PC-3 (cell line): ENCODE measurements at regions of chr15 and their contacts with region 1.

Region 1: GRCh38 chr15:34084086-34084485 is 17.6 kb downstream of the EMC7 start:
- DNase-seq: peak; percentile 58
- ATAC-seq: peak; percentile 95
- H3K4me3 ChIP-seq: no peak overlapping the region
- H3K27ac ChIP-seq: no peak overlapping the region
- H3K4me1 ChIP-seq: no peaks in the 10 kb centered on the region
- H3K27me3 ChIP-seq: no peaks in the 10 kb centered on the region
- CTCF ChIP-seq: no peak

Region 2: GRCh38 chr15:34001536-34001935 is 82.5 kb before region 1 on chr15:
- CTCF ChIA-PET with region 1: no interaction called
- POLR2A ChIA-PET with region 1: no interaction called
- intact Hi-C with region 1: no loop called
- DNase-seq: peak; percentile 34
- ATAC-seq: peak; percentile 92
- H3K4me3 ChIP-seq: no peak overlapping the region
- H3K27ac ChIP-seq: no peak overlapping the region
- H3K4me1 ChIP-seq: no peaks in the 10 kb centered on the region
- H3K27me3 ChIP-seq: no peaks in the 10 kb centered on the region
- CTCF ChIP-seq: no peak

Region 3: DNA sequence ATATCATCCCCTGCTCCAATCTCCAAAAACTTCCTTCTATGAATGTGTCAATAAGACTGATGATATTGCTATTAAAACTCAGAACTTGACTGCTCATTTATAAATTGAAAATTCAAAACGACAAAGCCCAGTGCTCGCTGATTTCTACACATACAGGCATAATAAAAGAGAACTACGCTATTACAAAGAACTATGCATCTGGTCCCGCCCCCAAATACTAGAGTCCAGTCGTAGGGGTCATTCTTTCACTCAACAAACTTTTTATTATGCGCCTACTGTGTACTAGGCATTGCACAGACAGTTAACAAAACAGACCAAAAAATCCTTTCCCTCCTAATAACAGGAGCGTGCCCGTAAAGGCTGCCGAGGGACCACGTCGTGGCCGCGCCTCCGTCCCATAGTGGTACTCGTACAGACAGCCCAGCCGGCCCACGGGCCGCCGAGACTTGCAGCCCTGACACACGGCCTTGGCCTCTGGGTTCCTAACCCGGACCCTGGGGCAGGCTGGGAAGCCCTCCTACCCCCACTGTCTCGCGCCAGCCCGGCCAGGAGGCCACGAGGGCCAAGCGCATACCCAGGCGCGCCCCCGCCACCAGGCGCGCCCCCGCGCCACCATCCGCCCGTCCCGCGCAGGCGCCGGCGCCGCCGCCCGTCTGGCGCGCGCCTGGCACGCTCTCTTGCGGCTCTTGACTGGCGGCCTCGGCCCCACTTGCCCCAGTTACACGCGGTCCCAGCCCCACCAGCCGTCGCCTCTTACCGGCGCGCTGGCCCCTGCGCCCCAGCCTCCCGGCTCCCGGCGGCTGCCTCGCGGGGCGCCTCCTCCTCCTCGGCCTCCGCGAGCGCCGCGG is 45.8 kb before region 1 on chr15:
- CTCF ChIA-PET with region 1: no interaction called
- POLR2A ChIA-PET with region 1: no interaction called
- intact Hi-C with region 1: loop called (anchors 5 kb)
- DNase-seq: peak; percentile 79
- ATAC-seq: peak; percentile 79
- H3K4me3 ChIP-seq: peak overlapping the region; percentile 94
- H3K27ac ChIP-seq: no peak overlapping the region
- H3K4me1 ChIP-seq: peaks cover 12% of the 10 kb centered on the region; the same call in 1 of the 2 replicates
- H3K27me3 ChIP-seq: no peaks in the 10 kb centered on the region
- CTCF ChIP-seq: no peak

Region 4: GRCh38 chr15:34461730-34462129 is 377.6 kb after region 1 on chr15:
- CTCF ChIA-PET with region 1: no interaction called
- POLR2A ChIA-PET with region 1: no interaction called
- intact Hi-C with region 1: loop called (anchors 10 kb)
- DNase-seq: no peak
- ATAC-seq: no peak
- H3K4me3 ChIP-seq: no peak overlapping the region
- H3K27ac ChIP-seq: no peak overlapping the region
- H3K4me1 ChIP-seq: no peaks in the 10 kb centered on the region
- H3K27me3 ChIP-seq: peaks cover 43% of the 10 kb centered on the region
- CTCF ChIP-seq: no peak